ENCODE measurements at regions of chr9 and their contacts with region 1.

Region 1: GRCh38 chr9:131905144-131905543 is 165.3 kb upstream of the RAPGEF1 start:
- H3K4me3 Mint-ChIP-seq: no peak overlapping the region
- H3K27ac Mint-ChIP-seq: no peak overlapping the region
- H3K4me1 Mint-ChIP-seq: peaks cover 6% of the 10 kb centered on the region
- H3K27me3 Mint-ChIP-seq: no peaks in the 10 kb centered on the region

Region 2: DNA sequence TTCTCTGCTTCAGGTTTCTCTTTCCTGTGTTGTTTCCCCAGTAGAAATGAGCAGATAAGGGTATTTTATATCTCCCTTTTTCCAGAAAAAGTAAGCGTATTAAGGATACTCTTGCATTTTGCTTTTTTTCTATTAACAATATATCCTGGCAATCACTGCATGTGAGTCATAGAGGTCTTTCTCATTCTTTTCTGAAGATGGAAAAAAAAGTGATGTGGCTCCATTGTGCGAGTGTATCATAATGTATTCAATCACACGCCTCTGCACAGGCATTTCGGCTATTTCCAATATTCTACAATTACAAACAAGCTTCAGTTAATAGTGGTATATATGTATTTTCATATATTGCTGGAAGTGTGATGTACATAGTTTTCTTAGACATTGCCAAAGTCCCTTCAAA is 18.6 kb after region 1 on chr9:
- intact Hi-C with region 1: loop called (anchors 2 kb)
- H3K4me3 Mint-ChIP-seq: no peak overlapping the region
- H3K27ac Mint-ChIP-seq: no peak overlapping the region
- H3K4me1 Mint-ChIP-seq: no peaks in the 10 kb centered on the region
- H3K27me3 Mint-ChIP-seq: no peaks in the 10 kb centered on the region

Region 3: GRCh38 chr9:132214027-132214622 is 309.0 kb after region 1 on chr9:
- intact Hi-C with region 1: no loop called
- H3K4me3 Mint-ChIP-seq: no peak overlapping the region
- H3K27ac Mint-ChIP-seq: no peak overlapping the region
- H3K4me1 Mint-ChIP-seq: peaks cover 33% of the 10 kb centered on the region
- H3K27me3 Mint-ChIP-seq: peaks cover 6% of the 10 kb centered on the region

Measured in dendritic cell treated with granulocyte-macrophage colony-stimulating factor and Interleukin-4, amounts not matched to agents 40 ng/mL and 50 ng/mL, for 4 days (primary cell).